Heart left ventricle (tissue), 16 donors: ENCODE measurements at regions of chr7 and their contacts with region 1.

Region 1: GRCh38 chr7:86667732-86668131 is 24.0 kb downstream of the GRM3 start:
- DNase-seq: no peak
- ATAC-seq: no peak
- H3K4me3 ChIP-seq: no peak overlapping the region
- H3K27ac ChIP-seq: no peak overlapping the region
- H3K4me1 ChIP-seq: no peaks in the 10 kb centered on the region
- H3K27me3 ChIP-seq: peaks cover 0 to 3% (median 0%) of the 10 kb centered on the region in 9 donors
- CTCF ChIP-seq: peak in 1 of 12 donors; percentile 14
- POLR2A ChIP-seq: no peak

Region 2: DNA sequence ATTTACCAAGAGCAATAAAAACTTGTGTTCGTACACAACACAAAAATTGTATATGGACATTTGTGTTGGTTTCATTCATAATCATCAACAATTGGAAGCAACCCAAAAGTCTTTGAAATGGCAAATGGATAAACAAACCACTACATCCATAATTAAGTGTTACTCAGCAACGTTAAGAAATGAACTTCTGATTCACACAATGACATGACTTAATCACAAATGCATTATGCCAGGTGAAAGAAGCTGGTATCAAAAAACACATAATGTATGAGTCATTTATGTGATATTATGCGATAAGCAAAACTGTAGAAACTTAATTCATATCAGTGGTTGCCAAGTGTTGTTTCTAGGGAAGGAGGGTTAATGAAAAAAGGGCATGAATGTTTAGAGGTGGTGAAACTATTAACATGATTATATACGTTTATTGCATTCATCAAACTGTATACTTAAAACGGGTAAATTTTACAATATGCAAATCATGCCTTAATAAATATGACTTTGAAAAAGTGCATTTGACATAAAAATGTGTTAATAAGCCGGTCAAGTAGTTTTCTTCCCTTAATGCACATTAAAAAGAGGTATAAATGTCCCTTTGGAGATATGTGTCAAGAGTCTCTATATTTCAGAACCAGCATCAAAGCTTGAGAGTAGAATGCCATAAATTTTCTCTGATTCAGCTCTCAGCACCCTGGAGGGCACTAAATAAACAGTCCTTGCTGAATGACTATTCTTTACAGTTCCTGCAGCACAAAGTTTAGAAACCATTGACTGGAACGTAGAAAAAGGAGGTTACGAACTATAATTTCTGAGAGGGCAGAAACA is 108.8 kb before region 1 on chr7:
- intact Hi-C with region 1: no loop called
- DNase-seq: no peak
- ATAC-seq: no peak
- H3K4me3 ChIP-seq: no peak overlapping the region
- H3K27ac ChIP-seq: no peak overlapping the region
- H3K4me1 ChIP-seq: no peaks in the 10 kb centered on the region
- H3K27me3 ChIP-seq: no peaks in the 10 kb centered on the region
- CTCF ChIP-seq: no peak
- POLR2A ChIP-seq: no peak

Region 3: DNA sequence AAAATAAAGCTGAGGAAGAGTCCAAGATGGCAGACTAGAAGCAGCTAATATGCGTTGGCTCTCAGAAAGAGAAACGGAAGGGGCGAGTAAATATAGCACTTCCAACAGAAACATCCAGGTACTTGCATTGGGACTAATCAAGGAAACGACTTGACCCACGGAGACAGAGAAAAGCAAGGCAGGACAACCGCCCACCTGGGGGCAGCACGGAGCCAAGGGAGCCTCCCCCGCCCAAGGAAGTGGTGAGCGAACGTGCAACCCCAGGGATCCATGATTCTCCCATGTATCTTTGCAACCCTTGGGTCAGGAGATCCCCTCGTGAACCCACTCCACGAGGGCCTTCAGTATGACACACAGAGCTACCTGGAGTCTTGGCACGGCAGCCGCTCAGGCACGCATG is 69.4 kb before region 1 on chr7:
- intact Hi-C with region 1: no loop called
- DNase-seq: no peak
- ATAC-seq: no peak
- H3K4me3 ChIP-seq: no peak overlapping the region
- H3K27ac ChIP-seq: no peak overlapping the region
- H3K4me1 ChIP-seq: no peaks in the 10 kb centered on the region
- H3K27me3 ChIP-seq: no peaks in the 10 kb centered on the region
- CTCF ChIP-seq: peak in 2 of 12 donors; percentile 6
- POLR2A ChIP-seq: no peak

Region 4: GRCh38 chr7:86733783-86734182 is 66.1 kb after region 1 on chr7:
- intact Hi-C with region 1: no loop called
- DNase-seq: no peak
- ATAC-seq: no peak
- H3K4me3 ChIP-seq: no peak overlapping the region
- H3K27ac ChIP-seq: no peak overlapping the region
- H3K4me1 ChIP-seq: no peaks in the 10 kb centered on the region
- H3K27me3 ChIP-seq: no peaks in the 10 kb centered on the region
- CTCF ChIP-seq: no peak
- POLR2A ChIP-seq: no peak

Region 5: GRCh38 chr7:86814661-86815379 is 147.1 kb after region 1 on chr7:
- intact Hi-C with region 1: loop called in 1 of 10 experiments (anchors 10 kb)
- DNase-seq: no peak
- ATAC-seq: no peak
- H3K4me3 ChIP-seq: no peak overlapping the region
- H3K27ac ChIP-seq: no peak overlapping the region
- H3K4me1 ChIP-seq: no peaks in the 10 kb centered on the region
- H3K27me3 ChIP-seq: no peaks in the 10 kb centered on the region
- CTCF ChIP-seq: peak in 7 of 12 donors; percentile 27 to 46 (median 38)
- POLR2A ChIP-seq: no peak